ENCODE measurements at regions of chr17 and their contacts with region 1.

Region 1: DNA sequence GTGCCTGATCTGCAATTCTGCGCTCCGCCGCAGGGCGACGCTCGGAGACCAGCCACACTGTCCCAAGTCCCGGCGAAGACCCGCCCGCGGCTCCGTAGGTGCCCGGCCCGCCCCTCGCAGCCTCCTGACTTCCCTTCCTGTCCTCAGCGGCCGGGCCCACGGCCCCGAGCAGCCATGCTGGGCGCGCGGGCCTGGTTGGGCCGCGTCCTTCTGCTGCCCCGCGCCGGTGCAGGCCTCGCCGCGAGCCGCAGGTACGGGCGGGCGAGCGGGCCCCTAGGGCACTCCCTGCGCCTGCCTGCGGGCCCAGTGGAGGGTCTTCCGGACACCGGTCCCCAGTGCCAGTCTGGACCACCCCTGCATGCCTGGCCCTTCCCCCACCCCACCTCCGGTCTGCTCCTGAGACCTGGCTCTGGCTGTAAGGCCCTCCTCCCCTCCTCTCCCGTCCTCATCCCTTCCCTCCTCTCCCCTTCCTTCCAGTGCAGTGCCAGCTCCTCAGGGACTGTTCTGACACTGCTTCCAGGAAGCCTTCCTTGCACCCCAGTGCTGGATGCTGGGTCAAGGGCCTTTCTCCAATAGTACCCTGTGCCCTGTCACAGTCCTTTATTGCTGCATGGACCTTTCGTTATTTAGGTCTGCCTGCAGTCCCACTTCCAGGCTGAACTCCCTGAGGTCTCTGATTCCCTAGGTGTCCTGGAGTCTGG is at the start of gene SPATA20:
- DNase-seq: peak; percentile 99
- H3K4me3 ChIP-seq: peak within 1 kb of the TSS; percentile 57
- H3K4me3 Mint-ChIP-seq: peak within 1 kb of the TSS; percentile 80
- H3K27ac Mint-ChIP-seq: peak within 1 kb of the TSS; percentile 72
- H3K4me1 ChIP-seq: peaks cover 38% of the 10 kb centered on the region
- H3K4me1 Mint-ChIP-seq: peaks cover 43% of the 10 kb centered on the region
- H3K27me3 ChIP-seq: no peaks in the 10 kb centered on the region
- H3K27me3 Mint-ChIP-seq: no peaks in the 10 kb centered on the region
- CTCF ChIP-seq: peak; percentile 100
- total RNA-seq, gene SPATA20: 149 and 176 TPM in 2 replicates

Region 2: DNA sequence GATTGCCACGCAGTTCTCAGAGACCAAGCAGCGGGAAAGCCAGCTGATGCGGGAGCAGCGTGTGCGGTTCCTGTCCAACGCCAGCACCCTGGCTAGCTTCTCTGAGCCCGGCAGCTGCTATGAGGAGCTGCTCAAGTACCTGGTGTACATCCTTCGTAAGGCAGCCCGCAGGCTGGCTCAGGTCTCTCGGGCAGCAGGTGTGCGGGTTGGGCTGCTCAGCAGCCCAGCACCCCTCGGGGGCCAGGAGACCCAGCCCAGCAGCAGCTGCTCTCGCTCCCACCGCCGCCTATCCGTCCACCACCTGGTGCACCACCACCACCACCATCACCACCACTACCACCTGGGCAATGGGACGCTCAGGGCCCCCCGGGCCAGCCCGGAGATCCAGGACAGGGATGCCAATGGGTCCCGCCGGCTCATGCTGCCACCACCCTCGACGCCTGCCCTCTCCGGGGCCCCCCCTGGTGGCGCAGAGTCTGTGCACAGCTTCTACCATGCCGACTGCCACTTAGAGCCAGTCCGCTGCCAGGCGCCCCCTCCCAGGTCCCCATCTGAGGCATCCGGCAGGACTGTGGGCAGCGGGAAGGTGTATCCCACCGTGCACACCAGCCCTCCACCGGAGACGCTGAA is 28.5 kb after region 1 on chr17:
- CTCF ChIA-PET with region 1: interaction called, 14 read pairs
- POLR2A ChIA-PET with region 1: no interaction called
- intact Hi-C with region 1: no loop called
- DNase-seq: peak in 1 of 2 experiments; percentile 68
- H3K4me3 ChIP-seq: no peak overlapping the region
- H3K4me3 Mint-ChIP-seq: no peak overlapping the region
- H3K27ac Mint-ChIP-seq: no peak overlapping the region
- H3K4me1 ChIP-seq: no peaks in the 10 kb centered on the region
- H3K4me1 Mint-ChIP-seq: no peaks in the 10 kb centered on the region
- H3K27me3 ChIP-seq: no peaks in the 10 kb centered on the region
- H3K27me3 Mint-ChIP-seq: peaks cover 2% of the 10 kb centered on the region
- CTCF ChIP-seq: peak; percentile 36 to 39

Region 3: DNA sequence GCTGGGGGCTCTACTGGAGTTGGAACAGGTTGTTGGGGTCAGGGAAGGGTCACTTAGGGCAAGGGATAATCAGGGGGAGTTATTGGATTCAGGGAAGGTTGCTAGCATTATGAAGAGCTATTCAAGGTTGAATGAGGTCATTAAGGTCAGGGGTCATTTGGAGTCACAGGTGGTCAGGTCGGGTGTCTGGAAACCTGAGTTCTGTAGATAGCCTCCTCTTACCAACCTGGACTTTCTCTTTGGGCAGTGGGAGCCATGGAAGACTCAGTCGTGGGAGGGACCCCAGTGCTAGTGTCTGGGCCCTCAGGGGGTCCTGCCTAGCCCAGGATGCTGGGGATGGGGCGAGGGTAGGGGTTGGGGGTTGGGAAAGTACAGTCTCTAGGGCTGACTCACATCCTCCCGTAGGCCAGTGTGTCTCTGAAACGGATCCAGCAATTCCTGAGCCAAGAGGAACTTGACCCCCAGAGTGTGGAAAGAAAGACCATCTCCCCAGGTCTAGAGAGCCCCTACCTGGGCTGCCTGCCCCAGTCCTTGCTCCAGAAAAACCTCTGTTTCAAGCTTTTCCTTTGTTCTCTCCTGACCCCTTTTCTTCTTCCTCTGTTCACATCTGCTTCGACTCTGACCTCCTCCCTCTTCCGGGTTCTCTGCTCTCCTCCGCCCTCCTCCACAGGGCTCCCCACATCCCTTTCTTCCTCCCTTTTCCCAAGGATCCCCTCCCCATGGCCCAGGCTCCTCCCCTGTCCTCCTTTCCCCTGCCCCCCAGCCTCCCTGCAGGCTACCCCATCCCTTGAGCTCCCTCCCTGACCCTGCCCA is 121.0 kb after region 1 on chr17:
- CTCF ChIA-PET with region 1: interaction called, 15 read pairs
- POLR2A ChIA-PET with region 1: interaction called, 3 read pairs
- intact Hi-C with region 1: no loop called
- DNase-seq: peak in 1 of 2 experiments; percentile 49
- H3K4me3 ChIP-seq: no peak overlapping the region
- H3K4me3 Mint-ChIP-seq: no peak overlapping the region
- H3K27ac Mint-ChIP-seq: peak overlapping the region; percentile 3
- H3K4me1 ChIP-seq: peaks cover 32% of the 10 kb centered on the region
- H3K4me1 Mint-ChIP-seq: peaks cover 44% of the 10 kb centered on the region
- H3K27me3 ChIP-seq: no peaks in the 10 kb centered on the region
- H3K27me3 Mint-ChIP-seq: no peaks in the 10 kb centered on the region
- CTCF ChIP-seq: no peak

Region 4: DNA sequence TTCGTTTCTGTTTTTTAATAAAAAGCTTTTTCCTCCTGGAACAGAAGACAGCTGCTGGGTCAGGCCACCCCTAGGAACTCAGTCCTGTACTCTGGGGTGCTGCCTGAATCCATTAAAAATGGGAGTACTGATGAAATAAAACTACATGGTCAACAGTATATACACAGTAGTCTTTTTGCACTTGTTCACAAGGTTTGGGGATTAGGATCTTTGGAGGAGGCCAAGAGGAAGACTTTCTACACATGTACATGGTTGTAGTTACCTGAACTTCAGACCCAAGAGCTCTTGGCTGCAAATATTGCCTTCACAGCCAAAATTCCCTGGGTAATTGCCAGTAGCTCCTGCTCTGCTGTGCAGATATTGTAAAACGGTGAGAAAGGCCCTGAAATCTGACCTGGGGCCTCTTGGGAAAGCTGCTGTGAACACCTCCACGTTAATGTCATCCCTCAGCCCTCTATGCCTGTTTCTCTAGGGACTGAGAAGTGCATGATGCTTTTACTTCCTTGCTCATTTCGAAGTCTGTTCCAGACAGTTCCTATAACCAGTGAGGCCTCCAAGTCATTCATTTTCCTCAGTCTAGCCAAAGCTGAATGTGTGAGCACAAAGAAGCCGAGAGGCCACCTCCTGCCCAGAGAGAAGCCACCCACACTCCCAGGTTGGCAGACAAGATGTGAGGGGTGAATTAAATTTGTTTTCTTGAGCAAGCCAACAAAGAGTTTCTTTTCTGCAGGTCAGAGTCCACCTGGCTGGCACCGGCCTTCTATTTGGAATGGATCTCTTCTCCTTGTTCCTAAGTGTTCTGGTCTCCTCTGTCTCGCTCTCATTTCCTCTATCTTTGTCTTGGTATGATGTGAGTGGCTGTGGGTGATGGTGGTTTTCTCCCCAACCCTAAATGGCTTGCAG is 144.6 kb after region 1 on chr17:
- CTCF ChIA-PET with region 1: interaction called, 118 read pairs
- POLR2A ChIA-PET with region 1: interaction called, 18 read pairs
- intact Hi-C with region 1: loop called (anchors 1 kb)
- DNase-seq: peak in 1 of 2 experiments; percentile 54
- H3K4me3 ChIP-seq: no peak overlapping the region
- H3K4me3 Mint-ChIP-seq: peak overlapping the region; percentile 63
- H3K27ac Mint-ChIP-seq: peak overlapping the region; percentile 88
- H3K4me1 ChIP-seq: peaks cover 86% of the 10 kb centered on the region
- H3K4me1 Mint-ChIP-seq: peaks cover 70% of the 10 kb centered on the region
- H3K27me3 ChIP-seq: no peaks in the 10 kb centered on the region
- H3K27me3 Mint-ChIP-seq: no peaks in the 10 kb centered on the region
- CTCF ChIP-seq: no peak

Region 5: DNA sequence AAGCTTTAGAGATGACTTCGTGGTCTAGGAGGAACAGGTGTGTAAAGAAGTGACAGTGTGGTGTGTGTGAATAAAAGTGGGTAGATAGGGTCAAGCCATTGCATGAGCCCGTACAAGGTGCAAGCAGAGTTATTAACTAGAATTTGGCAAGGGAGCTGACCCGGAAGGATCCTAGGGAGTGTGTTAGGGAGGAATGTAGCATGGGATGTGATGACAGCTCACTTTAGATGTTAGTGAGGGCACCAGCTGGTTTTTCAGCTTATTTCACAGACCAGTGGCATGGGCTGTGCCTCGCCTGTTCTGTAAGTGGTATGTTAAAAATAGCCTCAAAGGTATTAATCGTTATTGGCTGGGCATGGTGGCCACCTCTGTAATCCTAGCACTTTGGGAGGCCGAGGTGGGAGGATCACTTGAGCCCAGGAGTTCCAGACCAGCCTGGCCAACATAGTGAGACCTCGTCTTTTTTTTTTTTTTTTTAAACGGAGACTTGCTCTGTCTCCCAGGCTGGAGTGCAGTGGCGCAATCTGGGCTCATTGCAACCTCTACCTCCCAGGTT is 211.9 kb after region 1 on chr17:
- CTCF ChIA-PET with region 1: interaction called, 4 read pairs
- POLR2A ChIA-PET with region 1: interaction called, 4 read pairs
- intact Hi-C with region 1: loop called (anchors 1 kb)
- DNase-seq: peak in 1 of 2 experiments; percentile 40
- H3K4me3 ChIP-seq: no peak overlapping the region
- H3K4me3 Mint-ChIP-seq: no peak overlapping the region
- H3K27ac Mint-ChIP-seq: no peak overlapping the region
- H3K4me1 ChIP-seq: peaks cover 23% of the 10 kb centered on the region
- H3K4me1 Mint-ChIP-seq: peaks cover 27% of the 10 kb centered on the region
- H3K27me3 ChIP-seq: no peaks in the 10 kb centered on the region
- H3K27me3 Mint-ChIP-seq: no peaks in the 10 kb centered on the region
- CTCF ChIP-seq: no peak

Region 6: DNA sequence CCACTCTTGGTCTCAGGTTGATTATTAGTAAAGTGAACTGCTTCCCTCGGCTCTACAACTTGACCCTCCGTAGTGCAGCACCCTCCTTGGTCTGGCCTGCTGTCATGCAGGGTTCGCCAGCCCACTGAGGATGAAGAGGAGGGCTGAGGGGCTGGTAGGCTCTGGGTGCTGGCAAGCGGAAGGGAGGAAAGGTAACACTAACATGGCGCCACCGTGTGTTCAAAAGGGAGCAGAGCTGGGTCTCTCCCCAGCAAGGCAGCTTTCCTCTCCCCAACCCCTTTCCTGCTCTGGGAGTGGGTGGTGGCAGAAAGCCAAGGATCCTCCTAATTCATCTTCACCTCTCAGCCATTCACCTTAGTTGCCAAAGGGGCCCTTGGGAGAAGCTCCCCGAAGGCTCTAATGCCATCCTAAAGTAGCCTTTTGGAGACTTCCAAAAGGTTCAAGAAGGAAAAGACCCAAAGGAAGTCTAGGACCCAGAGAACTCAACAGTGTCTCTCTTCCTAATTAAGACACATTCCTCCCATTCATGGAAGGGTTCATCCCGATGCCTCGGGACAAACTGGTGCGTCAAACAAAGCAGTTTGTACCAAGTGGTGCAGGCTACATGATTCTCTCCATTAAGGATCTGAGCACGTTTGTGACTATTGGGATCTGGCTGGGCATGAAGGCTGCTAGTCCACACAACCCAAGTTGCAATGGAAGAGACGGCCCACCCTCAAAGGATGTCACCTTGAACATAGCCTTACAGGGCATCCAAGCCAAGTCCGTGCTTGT is 409.8 kb after region 1 on chr17:
- CTCF ChIA-PET with region 1: no interaction called
- POLR2A ChIA-PET with region 1: no interaction called
- intact Hi-C with region 1: loop called (anchors 2 kb)
- DNase-seq: peak; percentile 86 to 87
- H3K4me3 ChIP-seq: no peak overlapping the region
- H3K4me3 Mint-ChIP-seq: no peak overlapping the region
- H3K27ac Mint-ChIP-seq: no peak overlapping the region
- H3K4me1 ChIP-seq: peaks cover 9% of the 10 kb centered on the region
- H3K4me1 Mint-ChIP-seq: peaks cover 13% of the 10 kb centered on the region
- H3K27me3 ChIP-seq: no peaks in the 10 kb centered on the region
- H3K27me3 Mint-ChIP-seq: no peaks in the 10 kb centered on the region
- CTCF ChIP-seq: peak; percentile 96 to 98

Measured in Caco-2 (cell line).